MCF 10A (cell line): ENCODE measurements at regions of chr12 and their contacts with region 1.

Region 1: DNA sequence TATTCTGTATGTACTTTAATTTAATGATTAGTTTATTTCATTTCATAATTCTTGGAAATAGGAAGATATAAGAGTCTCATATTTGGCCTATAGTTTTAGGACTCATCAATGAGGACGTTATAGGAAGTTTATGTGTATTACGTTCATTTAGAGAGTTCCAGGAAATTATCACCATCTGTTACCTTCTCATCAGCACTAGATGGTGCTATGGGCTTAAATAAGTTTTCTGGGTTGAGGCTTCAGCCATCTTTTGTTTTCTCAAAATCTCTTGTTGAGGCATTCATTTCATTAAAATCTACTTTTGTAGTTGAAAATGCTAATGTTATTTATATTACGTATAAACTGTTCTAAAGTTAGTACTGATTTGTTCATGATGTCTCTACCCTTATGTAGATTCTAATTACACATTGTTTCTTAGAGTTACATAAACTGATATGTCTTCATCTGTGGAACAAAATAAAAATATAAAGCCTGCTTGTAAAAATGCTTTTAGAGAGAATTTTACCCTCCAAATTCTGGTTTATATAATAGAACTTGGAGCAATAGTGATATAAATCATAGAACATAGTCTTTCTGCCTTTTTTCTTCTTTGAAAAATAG is 89.2 kb downstream of the CFAP54 start:
- DNase-seq: peak; percentile 72
- H3K4me3 Mint-ChIP-seq: no peak overlapping the region
- H3K27ac Mint-ChIP-seq: no peak overlapping the region
- H3K4me1 Mint-ChIP-seq: no peaks in the 10 kb centered on the region
- H3K27me3 Mint-ChIP-seq: no peaks in the 10 kb centered on the region
- CTCF ChIP-seq: peak; percentile 60

Region 2: GRCh38 chr12:97308576-97309198 is 730.1 kb after region 1 on chr12:
- CTCF ChIA-PET with region 1: interaction called, 15 read pairs
- POLR2A ChIA-PET with region 1: no interaction called
- intact Hi-C with region 1: loop called (anchors 1 kb)
- DNase-seq: peak; percentile 57
- H3K4me3 Mint-ChIP-seq: no peak overlapping the region
- H3K27ac Mint-ChIP-seq: no peak overlapping the region
- H3K4me1 Mint-ChIP-seq: no peaks in the 10 kb centered on the region
- H3K27me3 Mint-ChIP-seq: peaks cover 51% of the 10 kb centered on the region
- CTCF ChIP-seq: peak; percentile 57

Region 3: DNA sequence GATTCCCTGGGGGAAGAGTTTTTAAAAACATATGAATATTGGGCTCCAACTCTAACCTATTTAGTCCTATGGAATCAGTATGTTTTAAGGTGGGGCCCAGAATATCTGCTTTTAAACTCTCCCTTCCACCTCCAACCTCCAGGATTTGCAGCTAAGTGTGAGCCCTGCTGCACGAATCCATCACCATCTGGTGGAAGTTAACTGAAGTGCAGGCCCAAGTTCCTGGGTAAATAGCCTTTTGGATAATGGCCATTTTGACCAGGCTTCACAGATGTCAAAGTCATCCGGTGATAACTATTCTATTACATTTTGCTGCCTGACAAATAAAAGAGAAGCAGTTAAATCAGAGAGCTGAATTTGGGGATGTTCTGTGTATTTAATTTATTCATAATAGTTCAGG is 825.9 kb after region 1 on chr12:
- CTCF ChIA-PET with region 1: interaction called, 6 read pairs
- POLR2A ChIA-PET with region 1: no interaction called
- intact Hi-C with region 1: loop called (anchors 5 kb)
- DNase-seq: peak; percentile 43
- H3K4me3 Mint-ChIP-seq: no peak overlapping the region
- H3K27ac Mint-ChIP-seq: no peak overlapping the region
- H3K4me1 Mint-ChIP-seq: no peaks in the 10 kb centered on the region
- H3K27me3 Mint-ChIP-seq: no peaks in the 10 kb centered on the region
- CTCF ChIP-seq: peak; percentile 73

Region 4: GRCh38 chr12:98397316-98398105 is 1818.9 kb after region 1 on chr12:
- CTCF ChIA-PET with region 1: interaction called, 9 read pairs
- POLR2A ChIA-PET with region 1: interaction called, 3 read pairs
- intact Hi-C with region 1: loop called (anchors 1 kb)
- DNase-seq: peak; percentile 82
- H3K4me3 Mint-ChIP-seq: peak overlapping the region; percentile 74
- H3K27ac Mint-ChIP-seq: peak overlapping the region; percentile 29
- H3K4me1 Mint-ChIP-seq: peaks cover 19% of the 10 kb centered on the region
- H3K27me3 Mint-ChIP-seq: peaks cover 6% of the 10 kb centered on the region
- CTCF ChIP-seq: peak; percentile 85